ENCODE measurements at regions of chr19 and their contacts with region 1.

Region 1: GRCh38 chr19:38849860-38850435 is at the start of gene HNRNPL:
- DNase-seq: peak in 1 of 2 donors; percentile 100
- H3K4me3 ChIP-seq: peak within 1 kb of the TSS; percentile 81 to 98
- H3K27ac ChIP-seq: peak within 1 kb of the TSS; percentile 98 to 100
- H3K4me1 ChIP-seq: peaks cover 16 to 41% of the 10 kb centered on the region in 2 donors
- H3K27me3 ChIP-seq: no peaks in the 10 kb centered on the region
- CTCF ChIP-seq: peak; percentile 2 to 34 (median 31)
- total RNA-seq, gene HNRNPL: 110 TPM

Region 2: DNA sequence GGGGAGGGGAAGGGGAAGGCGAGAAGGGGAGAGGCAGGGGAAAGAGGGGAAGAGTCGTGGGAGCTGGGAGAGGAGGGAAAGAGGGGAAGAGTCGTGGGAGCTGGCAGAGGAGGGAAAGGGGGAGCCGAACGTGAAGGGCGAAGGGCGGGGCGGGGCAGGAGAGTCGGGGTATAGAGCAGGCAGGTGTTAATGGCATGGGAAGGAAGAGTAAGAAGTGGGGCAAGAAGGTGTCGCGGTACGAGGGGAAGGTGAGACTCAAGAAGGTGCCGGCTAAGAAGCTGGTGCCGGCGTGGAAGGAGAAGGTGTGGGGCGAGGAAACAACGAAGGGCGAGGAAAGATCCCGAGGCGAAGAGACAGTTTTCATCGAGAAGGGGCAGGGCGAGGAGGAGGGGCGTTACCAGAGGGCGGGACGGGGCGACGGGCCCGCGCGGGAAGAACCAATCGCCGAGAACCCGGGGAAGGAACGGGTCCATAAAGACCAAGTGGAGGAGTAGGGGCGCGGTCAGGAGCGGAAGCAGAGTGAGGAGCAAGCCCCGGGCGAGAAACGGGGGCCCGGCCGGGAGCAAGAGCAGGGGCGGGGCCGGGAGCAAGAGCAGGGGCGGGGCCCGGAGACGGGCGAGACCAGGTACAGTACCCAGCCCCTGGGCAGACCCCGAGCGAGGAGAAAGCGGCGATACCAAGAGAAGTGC is 513.9 kb before region 1 on chr19:
- intact Hi-C with region 1: loop called (anchors 2 kb)
- DNase-seq: peak; percentile 90 to 98
- H3K4me3 ChIP-seq: peak overlapping the region; percentile 70 to 72
- H3K27ac ChIP-seq: peak overlapping the region; percentile 96 to 99
- H3K4me1 ChIP-seq: peaks cover 0 to 18% of the 10 kb centered on the region in 2 donors
- H3K27me3 ChIP-seq: no peaks in the 10 kb centered on the region
- CTCF ChIP-seq: no peak

Region 3: GRCh38 chr19:38544034-38544958 is 305.7 kb before region 1 on chr19:
- intact Hi-C with region 1: loop called (anchors 5 kb)
- DNase-seq: peak; percentile 77 to 80
- H3K4me3 ChIP-seq: peak overlapping the region in 1 of 2 donors; percentile 40
- H3K27ac ChIP-seq: peak overlapping the region in 1 of 2 donors; percentile 12
- H3K4me1 ChIP-seq: peaks cover 0 to 12% of the 10 kb centered on the region in 2 donors
- H3K27me3 ChIP-seq: no peaks in the 10 kb centered on the region
- CTCF ChIP-seq: peak; percentile 46 to 67 (median 55)

Region 4: DNA sequence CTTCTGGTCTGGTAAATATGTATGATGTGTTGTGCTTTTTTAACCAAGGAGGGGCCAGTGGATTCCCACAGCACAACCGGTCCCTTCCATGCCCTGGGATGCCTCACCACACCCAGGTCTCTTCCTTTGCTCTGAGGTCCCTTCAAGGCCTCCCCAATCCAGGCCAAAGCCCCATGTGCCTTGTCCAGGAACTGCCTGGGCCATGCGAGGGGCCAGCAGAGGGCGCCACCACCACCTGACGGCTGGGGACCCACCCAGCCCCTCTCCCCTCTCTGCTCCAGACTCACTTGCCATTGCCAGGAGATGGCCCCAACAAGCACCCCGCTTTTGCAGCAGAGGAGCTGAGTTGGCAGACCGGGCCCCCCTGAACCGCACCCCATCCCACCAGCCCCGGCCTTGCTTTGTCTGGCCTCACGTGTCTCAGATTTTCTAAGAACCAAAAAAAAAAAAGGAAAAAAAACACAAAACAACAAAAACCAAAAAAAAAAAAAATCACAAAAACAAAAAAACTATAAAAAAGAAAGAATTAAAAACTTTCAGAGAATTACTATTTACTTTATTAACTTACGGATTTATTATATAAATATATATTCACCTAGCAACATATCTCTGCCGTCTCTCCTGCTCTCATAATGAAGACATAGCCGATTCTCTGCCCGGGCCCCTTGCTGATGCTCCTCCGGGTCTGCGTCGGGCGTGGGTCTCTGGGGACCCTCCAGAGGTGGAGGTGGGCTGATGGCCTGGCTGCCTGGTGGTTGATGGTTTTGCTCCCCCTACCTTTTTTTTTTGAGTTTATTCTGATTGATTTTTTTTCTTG is 120.1 kb before region 1 on chr19:
- intact Hi-C with region 1: loop called (anchors 5 kb)
- DNase-seq: no peak
- H3K4me3 ChIP-seq: no peak overlapping the region
- H3K27ac ChIP-seq: peak overlapping the region in 1 of 2 donors; percentile 46
- H3K4me1 ChIP-seq: peaks cover 0 to 11% of the 10 kb centered on the region in 2 donors
- H3K27me3 ChIP-seq: no peaks in the 10 kb centered on the region
- CTCF ChIP-seq: peak; percentile 71 to 78 (median 74)

Region 5: DNA sequence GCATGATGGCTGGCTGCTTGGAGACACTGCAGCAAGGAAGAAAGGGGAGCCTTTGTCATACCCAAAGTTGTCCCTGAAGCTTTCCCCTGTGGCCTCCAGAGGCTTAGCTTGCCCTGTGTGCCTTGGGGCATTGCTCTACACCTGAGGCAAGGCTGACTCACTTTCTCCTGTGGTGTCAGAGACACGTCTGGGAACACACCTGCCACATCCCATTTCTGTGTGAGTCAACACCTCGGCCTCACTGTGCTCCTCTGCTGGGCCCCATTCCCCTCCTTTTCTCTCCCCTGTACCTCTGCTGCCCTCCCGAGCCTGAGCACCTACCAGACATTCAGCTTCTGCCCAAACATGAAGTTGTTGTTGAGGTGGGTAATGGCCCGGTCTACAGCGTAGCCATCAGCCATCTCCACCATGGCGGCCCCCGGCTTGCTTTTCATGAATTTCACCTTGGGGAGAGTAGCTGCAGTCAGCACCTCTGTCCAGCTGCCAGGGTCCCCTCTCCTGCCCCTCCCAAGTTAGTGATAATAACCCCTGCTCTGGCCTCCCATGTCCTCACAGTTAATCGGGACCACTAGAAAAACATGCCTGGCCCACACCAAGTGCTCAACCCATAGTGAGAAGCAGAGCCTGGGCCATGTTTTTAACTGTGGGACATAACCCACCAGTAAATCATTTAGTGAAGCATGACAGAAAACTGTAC is 11.2 kb before region 1 on chr19:
- intact Hi-C with region 1: no loop called
- DNase-seq: no peak
- H3K4me3 ChIP-seq: no peak overlapping the region
- H3K27ac ChIP-seq: peak overlapping the region in 1 of 2 donors; percentile 25
- H3K4me1 ChIP-seq: peaks cover 3 to 12% of the 10 kb centered on the region in 2 donors
- H3K27me3 ChIP-seq: no peaks in the 10 kb centered on the region
- CTCF ChIP-seq: no peak

Region 6: DNA sequence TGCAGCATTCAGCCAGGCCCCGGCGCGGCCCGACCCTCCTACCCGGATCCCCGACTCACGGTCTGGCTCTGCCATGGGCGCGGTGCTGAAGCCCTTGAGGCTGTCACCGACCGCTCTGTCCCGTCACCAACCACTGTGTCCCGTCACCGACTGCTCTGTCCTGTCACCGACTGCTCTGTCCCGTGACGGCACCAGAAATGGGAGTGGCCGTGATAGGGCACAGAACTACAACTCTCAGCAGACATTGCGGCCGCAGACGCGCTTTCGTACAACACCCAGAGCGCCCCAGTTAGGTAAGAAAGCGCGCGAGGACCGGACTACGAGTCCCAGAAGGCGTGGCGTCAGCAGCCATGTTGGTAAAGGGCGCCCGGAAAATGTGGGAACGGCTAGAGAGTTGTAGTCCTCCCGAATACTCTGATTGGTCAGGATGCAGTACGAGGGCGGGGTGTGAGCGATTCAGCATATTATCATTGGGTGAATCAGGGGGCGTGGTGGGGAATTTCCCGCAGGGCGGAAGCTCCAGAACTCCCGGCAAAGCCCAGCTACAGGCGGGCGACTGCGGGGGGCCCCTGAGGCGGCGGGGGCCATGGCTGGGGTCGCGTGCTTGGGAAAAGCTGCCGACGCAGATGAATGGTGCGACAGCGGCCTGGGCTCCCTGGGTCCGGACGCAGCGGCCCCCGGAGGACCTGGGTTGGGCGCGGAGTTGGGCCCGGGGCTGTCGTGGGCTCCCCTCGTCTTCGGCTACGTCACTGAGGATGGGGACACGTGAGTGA is 49.7 kb after region 1 on chr19 and contains the starts of genes NFKBIB and SIRT2:
- intact Hi-C with region 1: loop called (anchors 1 kb)
- DNase-seq: peak; percentile 100
- H3K4me3 ChIP-seq: peak within 1 kb of the TSS; percentile 89 to 94
- H3K27ac ChIP-seq: peak within 1 kb of the TSS; percentile 94
- H3K4me1 ChIP-seq: peaks cover 6 to 20% of the 10 kb centered on the region in 2 donors
- H3K27me3 ChIP-seq: no peaks in the 10 kb centered on the region
- CTCF ChIP-seq: no peak
- total RNA-seq, gene NFKBIB: 6.3 TPM
- total RNA-seq, gene SIRT2: 53.1 TPM

Region 7: GRCh38 chr19:39397360-39398296 is 547.7 kb after region 1 on chr19:
- intact Hi-C with region 1: loop called (anchors 2 kb)
- DNase-seq: peak; percentile 50 to 95
- H3K4me3 ChIP-seq: no peak overlapping the region
- H3K27ac ChIP-seq: peak overlapping the region; percentile 80 to 82
- H3K4me1 ChIP-seq: peaks cover 4 to 15% of the 10 kb centered on the region in 2 donors
- H3K27me3 ChIP-seq: no peaks in the 10 kb centered on the region
- CTCF ChIP-seq: peak; percentile 96 to 97 (median 97)